Right ventricle myocardium inferior (tissue), 1 donor: ENCODE measurements at regions of chr2 and their contacts with region 1.

Region 1: GRCh38 chr2:202178342-202178958 is 59.9 kb downstream of the SUMO1 start:
- DNase-seq: no peak
- ATAC-seq: peak; percentile 72

Region 2: DNA sequence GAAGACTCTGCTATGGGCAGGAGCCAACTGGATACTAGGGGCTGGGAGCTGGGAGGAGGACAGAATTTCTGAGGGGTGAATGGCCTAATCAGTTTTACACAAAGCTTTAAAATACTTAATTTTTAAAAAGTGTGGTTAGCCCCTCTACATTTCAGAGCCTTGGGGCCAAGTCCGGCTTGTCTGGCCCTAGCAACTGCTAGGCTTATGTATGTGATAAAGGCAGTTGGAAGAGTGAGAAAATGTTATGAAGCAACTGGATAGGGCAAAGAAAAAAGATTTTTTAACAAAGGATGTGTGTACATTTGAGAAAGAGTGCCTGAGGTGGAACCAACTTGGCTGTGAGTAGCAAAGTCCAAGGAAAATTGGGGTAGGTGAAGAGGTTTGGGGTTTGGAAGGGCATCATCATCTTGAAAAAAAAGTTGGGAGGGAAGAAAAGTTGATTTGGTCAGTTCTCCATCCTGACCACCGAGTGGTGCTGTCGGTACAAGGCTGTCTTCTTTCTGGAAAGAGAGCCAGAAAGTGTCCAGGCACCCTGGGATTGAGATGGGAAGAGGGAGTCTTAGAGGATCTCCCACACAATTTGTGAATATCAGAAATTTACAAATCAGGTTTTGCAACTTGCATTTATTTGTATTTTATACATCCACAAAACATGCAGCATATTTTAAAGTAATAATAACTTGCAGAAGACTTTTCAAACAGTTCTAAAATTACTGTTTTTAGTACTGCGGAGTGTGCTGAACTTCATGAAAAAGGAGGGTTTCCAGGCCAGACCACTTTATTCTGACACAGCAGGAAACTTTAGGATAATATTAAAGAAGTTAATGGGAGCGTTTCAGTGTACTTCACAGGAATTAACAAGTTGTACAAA is 382.6 kb before region 1 on chr2:
- intact Hi-C with region 1: loop called (anchors 1 kb)
- DNase-seq: no peak
- ATAC-seq: no peak

Region 3: GRCh38 chr2:202104278-202104870 is 74.1 kb before region 1 on chr2:
- intact Hi-C with region 1: no loop called
- DNase-seq: no peak
- ATAC-seq: no peak

Region 4: DNA sequence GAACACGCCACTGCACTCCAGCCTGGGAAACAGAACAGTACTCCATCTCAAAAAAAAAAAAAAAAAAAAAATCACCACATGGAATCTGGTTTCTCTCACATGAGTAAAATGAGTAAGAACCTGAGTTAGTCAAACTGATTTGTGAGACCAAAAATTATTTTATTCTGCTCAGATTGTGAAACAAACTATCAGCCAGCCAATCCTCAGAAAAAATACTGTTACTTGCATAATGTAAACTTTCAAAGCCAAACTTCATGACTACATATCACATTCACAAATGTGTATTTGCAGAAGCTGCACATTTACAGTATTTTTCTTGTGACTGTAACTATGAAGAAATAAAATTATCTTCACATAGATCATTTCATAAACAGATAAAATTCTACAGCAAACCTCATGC is 36.7 kb after region 1 on chr2:
- intact Hi-C with region 1: no loop called
- DNase-seq: no peak
- ATAC-seq: no peak